ENCODE measurements at regions of chr2 and their contacts with region 1.

Region 1: GRCh38 chr2:120735746-120736170 is at the start of gene GLI2:
- DNase-seq: peak; percentile 74
- ATAC-seq: peak; percentile 87
- H3K4me3 Mint-ChIP-seq: peak within 1 kb of the TSS; percentile 40
- H3K27ac Mint-ChIP-seq: no peak within 1 kb of the TSS
- H3K4me1 Mint-ChIP-seq: peaks cover 6% of the 10 kb centered on the region
- H3K27me3 Mint-ChIP-seq: peaks cover 64% of the 10 kb centered on the region
- total RNA-seq, gene GLI2: not detected

Region 2: DNA sequence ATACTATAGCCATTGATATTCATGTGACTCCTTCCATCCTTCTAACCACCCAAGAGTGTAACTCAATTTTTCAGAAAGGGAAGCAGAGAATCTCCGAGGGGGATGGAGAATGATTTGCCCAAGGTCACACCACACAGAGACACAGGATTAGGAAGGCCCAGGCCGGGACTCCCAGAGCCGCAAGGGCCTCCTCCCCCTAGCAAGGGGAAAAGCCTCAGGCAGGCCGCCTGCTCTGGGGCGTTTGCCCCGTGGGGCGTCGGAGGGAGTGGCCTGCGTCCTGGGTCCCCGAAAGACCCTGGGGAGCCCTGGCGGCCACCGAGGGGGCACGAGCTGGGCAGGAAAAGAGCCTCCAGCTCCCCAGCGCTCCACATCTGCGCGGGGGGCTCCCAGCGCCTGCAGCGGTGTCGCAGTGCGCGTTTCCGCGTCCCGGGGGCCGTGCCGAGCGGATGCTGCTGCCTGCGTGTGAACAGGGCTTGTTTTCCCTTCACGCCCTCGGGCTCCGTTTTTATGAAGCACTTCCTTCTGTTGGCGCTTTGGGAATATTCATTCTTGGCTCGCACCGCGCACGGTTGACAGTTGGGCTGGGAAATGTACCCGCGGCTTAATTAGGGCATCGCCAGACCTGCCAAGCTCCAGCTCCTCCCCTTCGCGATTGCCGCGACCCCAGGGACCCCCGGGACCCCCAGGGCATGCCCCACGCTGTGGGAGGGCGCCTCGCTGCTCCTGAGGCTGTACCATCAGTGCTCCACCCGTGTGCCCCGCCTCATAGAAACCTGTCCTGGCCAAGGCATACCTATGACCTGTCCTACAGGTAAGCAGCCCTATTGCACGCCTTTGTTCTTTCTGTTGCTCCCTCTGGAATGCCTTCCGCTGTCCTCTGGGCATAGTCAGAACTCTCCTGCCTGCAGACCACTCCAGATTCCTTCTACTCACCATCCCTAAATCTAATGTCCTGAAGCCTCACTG is 159.0 kb before region 1 on chr2:
- CTCF ChIA-PET with region 1: no interaction called
- POLR2A ChIA-PET with region 1: no interaction called
- intact Hi-C with region 1: no loop called
- DNase-seq: no peak
- ATAC-seq: no peak
- H3K4me3 Mint-ChIP-seq: no peak overlapping the region
- H3K27ac Mint-ChIP-seq: no peak overlapping the region
- H3K4me1 Mint-ChIP-seq: no peaks in the 10 kb centered on the region
- H3K27me3 Mint-ChIP-seq: peaks cover 21% of the 10 kb centered on the region

Region 3: GRCh38 chr2:121071034-121071504 is 335.3 kb after region 1 on chr2:
- CTCF ChIA-PET with region 1: no interaction called
- POLR2A ChIA-PET with region 1: interaction called, 3 read pairs
- intact Hi-C with region 1: loop called in 1 of 2 experiments (anchors 2 kb)
- DNase-seq: peak; percentile 78
- ATAC-seq: no peak
- H3K4me3 Mint-ChIP-seq: no peak overlapping the region
- H3K27ac Mint-ChIP-seq: no peak overlapping the region
- H3K4me1 Mint-ChIP-seq: no peaks in the 10 kb centered on the region
- H3K27me3 Mint-ChIP-seq: peaks cover 17% of the 10 kb centered on the region

Measured in activated CD4-positive, alpha-beta T cell treated with anti-CD3 and anti-CD28 coated beads for 36 hours (primary cell).